ENCODE measurements at regions of chr1 and their contacts with region 1.

Region 1: DNA sequence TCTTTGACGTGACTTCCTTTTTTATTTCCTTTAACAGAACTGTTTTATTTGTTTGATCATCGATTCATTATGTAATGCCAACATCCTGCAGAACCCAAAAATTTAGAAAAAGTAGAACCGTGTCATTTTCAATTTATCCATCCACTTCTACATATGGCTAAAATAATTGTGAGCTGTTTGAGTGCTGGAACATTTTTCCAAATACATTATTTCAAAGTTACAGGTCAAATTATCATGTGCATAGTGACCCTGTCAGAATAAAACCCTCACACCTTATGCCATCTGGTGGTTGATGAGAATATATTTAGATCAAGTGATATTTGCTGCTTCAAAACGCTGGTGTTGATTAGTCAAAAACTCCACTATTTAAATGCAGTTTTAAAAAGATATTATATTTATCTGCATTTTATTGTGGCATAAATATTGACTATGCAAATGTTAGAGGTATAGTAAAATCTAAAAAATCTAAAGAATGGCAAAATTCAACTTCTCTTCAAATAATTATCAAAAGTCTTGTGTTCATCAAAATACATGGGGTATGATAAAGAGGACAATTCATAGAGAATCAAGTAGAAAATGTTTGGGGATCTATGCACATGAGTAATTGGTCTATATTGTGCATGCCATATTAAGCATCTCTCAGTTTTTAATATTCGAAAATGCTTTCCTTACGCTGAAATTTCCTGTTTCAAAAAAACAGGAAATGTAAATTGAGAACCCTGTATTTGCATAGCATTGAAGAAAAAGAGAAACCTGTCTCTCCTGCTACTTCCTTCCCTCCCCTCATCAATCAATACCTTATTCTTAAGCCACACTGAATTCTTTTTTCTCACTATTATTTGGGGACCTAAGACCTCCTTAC is 39.7 kb downstream of the UBE2U start:
- DNase-seq: no peak
- H3K4me3 Mint-ChIP-seq: peak overlapping the region; percentile 62
- H3K27ac Mint-ChIP-seq: no peak overlapping the region
- H3K4me1 Mint-ChIP-seq: peaks cover 11% of the 10 kb centered on the region
- H3K27me3 Mint-ChIP-seq: peaks cover 20% of the 10 kb centered on the region

Region 2: GRCh38 chr1:63316984-63317816 is 925.9 kb before region 1 on chr1:
- intact Hi-C with region 1: loop called (anchors 5 kb)
- DNase-seq: peak; percentile 48
- H3K4me3 Mint-ChIP-seq: peak overlapping the region; percentile 74
- H3K27ac Mint-ChIP-seq: no peak overlapping the region
- H3K4me1 Mint-ChIP-seq: peaks cover 23% of the 10 kb centered on the region
- H3K27me3 Mint-ChIP-seq: peaks cover 68% of the 10 kb centered on the region

Region 3: DNA sequence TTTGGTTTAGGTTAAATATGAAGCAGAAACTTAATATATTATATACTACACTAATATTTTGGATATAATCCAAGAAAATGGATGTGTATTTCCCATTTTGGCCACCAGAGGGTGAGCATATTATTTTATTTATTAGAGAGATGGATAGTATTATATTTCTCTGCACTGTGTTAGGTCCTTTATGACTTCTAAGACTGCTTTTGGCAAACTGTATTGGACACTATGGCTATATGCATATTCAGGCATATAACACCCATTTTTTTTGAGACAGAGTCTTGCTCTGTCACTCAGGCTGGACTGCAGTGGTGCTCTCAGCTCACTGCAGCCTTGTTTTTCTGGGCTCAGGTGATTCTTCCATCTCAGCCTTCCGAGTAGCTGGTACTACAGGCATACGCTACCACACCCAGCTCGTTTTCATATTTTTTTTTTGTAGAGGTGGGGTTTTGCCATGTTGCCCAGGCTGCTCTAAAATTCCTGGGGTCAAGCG is 667.7 kb before region 1 on chr1:
- intact Hi-C with region 1: loop called (anchors 5 kb)
- DNase-seq: no peak
- H3K4me3 Mint-ChIP-seq: no peak overlapping the region
- H3K27ac Mint-ChIP-seq: no peak overlapping the region
- H3K4me1 Mint-ChIP-seq: no peaks in the 10 kb centered on the region
- H3K27me3 Mint-ChIP-seq: no peaks in the 10 kb centered on the region

Region 4: DNA sequence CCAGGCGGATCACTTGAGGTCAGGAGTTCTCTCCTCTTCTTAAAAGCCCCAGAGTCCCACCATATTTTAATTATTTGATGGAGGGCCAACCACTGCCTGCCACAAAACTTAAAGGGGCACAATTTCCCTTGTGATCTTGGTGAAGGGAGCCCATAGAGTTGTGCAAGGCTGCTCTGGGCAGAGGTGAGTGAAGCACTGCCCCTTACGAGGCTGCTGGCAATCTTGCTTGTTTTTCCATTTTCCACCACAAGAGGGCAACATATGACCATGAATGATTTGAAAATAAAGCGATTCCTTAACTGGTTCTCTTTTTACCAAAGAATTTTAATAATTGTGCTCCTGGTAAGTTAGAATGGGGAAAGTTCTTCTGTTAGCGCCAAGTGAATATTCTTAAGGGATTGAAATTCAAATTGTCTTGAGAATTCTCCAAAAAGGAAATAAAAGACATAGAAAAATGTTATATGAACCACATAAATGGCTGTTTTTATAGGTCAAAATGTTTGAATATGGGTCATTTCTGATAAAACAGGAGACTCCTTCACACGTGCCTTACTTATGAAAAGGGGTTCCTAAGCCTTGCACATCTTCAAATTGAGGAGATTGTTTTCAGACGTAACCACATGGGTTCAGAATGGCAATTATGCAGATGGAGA is 627.2 kb before region 1 on chr1:
- intact Hi-C with region 1: loop called (anchors 2 kb)
- DNase-seq: peak; percentile 33
- H3K4me3 Mint-ChIP-seq: no peak overlapping the region
- H3K27ac Mint-ChIP-seq: no peak overlapping the region
- H3K4me1 Mint-ChIP-seq: peaks cover 11% of the 10 kb centered on the region
- H3K27me3 Mint-ChIP-seq: no peaks in the 10 kb centered on the region

Region 5: GRCh38 chr1:63691701-63692425 is 551.3 kb before region 1 on chr1:
- intact Hi-C with region 1: loop called (anchors 2 kb)
- DNase-seq: peak; percentile 13
- H3K4me3 Mint-ChIP-seq: no peak overlapping the region
- H3K27ac Mint-ChIP-seq: no peak overlapping the region
- H3K4me1 Mint-ChIP-seq: peaks cover 3% of the 10 kb centered on the region
- H3K27me3 Mint-ChIP-seq: peaks cover 8% of the 10 kb centered on the region

Region 6: DNA sequence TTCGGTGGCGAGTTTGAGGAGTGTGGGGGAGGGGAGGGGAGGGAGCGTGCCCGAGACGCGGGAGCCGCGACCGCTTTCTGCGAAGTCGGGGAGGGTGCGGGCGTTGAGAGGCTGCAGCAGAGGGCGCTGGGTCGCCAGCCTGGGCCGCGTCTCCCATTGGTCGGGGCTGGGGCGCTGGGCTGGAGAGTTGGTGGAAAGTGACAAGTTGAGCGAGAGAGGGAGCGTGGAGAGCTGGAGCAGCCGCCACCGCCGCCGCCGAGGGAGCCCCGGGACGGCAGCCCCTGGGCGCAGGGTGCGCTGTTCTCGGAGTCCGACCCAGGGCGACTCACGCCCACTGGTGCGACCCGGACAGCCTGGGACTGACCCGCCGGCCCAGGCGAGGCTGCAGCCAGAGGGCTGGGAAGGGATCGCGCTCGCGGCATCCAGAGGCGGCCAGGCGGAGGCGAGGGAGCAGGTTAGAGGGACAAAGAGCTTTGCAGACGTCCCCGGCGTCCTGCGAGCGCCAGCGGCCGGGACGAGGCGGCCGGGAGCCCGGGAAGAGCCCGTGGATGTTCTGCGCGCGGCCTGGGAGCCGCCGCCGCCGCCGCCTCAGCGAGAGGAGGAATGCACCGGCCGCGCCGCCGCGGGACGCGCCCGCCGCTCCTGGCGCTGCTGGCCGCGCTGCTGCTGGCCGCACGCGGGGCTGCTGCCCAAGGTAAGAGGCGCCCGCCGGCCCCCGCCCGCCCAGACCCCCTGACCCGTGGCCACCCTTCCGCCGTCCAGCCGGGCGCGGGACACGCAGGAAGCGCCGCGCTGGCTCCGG is 469.1 kb before region 1 on chr1 and contains the start of gene ROR1:
- intact Hi-C with region 1: loop called (anchors 5 kb)
- DNase-seq: peak; percentile 52
- H3K4me3 Mint-ChIP-seq: peak within 1 kb of the TSS; percentile 84
- H3K27ac Mint-ChIP-seq: no peak within 1 kb of the TSS
- H3K4me1 Mint-ChIP-seq: peaks cover 16% of the 10 kb centered on the region
- H3K27me3 Mint-ChIP-seq: peaks cover 64% of the 10 kb centered on the region
- total RNA-seq, gene ROR1: 0.09 TPM in 1 of 2 replicates, not detected in the other

Region 7: GRCh38 chr1:64136752-64137411 is 106.2 kb before region 1 on chr1:
- intact Hi-C with region 1: loop called (anchors 1 kb)
- DNase-seq: peak; percentile 47
- H3K4me3 Mint-ChIP-seq: no peak overlapping the region
- H3K27ac Mint-ChIP-seq: no peak overlapping the region
- H3K4me1 Mint-ChIP-seq: peaks cover 1% of the 10 kb centered on the region
- H3K27me3 Mint-ChIP-seq: peaks cover 9% of the 10 kb centered on the region

Measured in activated T-helper 2 cell treated with anti-CD3 and anti-CD28 coated beads, Interferon-gamma antibody, Interleukin-2, Interleukin-4, amounts not matched to agents 10 μg/mL and 5 μg/mL and 100 μg/mL, durations not matched to agents 14 hours and 24 hours and 36 hours (primary cell).